Spleen (tissue), 13 donors: ENCODE measurements at regions of chr1 and their contacts with region 1.

Region 1: GRCh38 chr1:18597160-18598042 is 33.2 kb upstream of the PAX7 start:
- DNase-seq: peak; percentile 83
- H3K4me3 ChIP-seq: no peak overlapping the region
- H3K27ac ChIP-seq: no peak overlapping the region
- H3K4me1 ChIP-seq: peaks cover 0 to 5% (median 0%) of the 10 kb centered on the region in 6 donors
- H3K27me3 ChIP-seq: peaks cover 0 to 78% (median 20%) of the 10 kb centered on the region in 7 donors
- CTCF ChIP-seq: peak; percentile 32 to 83 (median 69)
- POLR2A ChIP-seq: no peak

Region 2: DNA sequence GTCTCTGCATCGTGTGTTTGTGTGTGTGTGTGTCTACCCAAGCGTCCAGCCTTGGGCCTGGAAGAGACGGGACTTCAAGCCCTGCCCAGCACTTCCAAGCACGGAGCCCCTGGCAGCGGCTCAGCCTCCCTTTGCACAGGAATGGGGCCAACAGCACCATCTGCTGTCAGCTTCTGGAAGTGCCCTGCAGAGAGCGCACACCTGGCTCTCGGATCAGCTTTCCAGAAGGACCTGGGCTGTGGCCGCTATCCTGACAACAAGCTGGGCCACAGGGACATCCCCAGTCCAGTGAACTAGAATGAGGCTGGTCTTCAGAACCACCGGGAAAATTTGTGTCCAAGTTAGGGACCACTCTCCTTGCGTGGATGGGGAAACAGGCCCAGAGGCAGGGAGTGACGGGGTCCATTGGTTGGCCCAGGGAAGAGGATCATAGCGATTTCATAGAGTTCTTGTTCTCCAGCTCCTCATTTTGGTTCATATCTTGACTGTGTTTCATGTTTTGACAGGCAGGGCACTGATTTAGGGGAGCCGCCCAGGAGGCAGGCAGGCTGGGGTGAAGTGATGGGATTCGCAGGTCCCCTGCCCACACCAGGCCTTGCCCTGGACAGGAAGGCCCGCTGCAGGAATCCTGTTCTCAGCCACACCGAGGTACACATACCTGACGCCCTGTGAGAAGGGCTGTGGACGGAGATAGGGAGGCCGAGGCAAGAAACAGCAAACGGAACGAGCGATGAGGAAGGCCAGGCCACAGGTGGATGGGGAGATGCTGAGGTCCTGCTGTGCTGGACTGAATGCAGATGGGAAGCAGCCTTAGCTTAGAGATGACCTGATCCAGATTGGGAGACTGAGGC is 223.6 kb after region 1 on chr1:
- intact Hi-C with region 1: loop called (anchors 2 kb)
- DNase-seq: peak; percentile 81
- H3K4me3 ChIP-seq: no peak overlapping the region
- H3K27ac ChIP-seq: no peak overlapping the region
- H3K4me1 ChIP-seq: peaks cover 0 to 5% (median 0%) of the 10 kb centered on the region in 6 donors
- H3K27me3 ChIP-seq: peaks cover 0 to 49% (median 19%) of the 10 kb centered on the region in 7 donors
- CTCF ChIP-seq: peak; percentile 38 to 91 (median 81)
- POLR2A ChIP-seq: no peak

Region 3: DNA sequence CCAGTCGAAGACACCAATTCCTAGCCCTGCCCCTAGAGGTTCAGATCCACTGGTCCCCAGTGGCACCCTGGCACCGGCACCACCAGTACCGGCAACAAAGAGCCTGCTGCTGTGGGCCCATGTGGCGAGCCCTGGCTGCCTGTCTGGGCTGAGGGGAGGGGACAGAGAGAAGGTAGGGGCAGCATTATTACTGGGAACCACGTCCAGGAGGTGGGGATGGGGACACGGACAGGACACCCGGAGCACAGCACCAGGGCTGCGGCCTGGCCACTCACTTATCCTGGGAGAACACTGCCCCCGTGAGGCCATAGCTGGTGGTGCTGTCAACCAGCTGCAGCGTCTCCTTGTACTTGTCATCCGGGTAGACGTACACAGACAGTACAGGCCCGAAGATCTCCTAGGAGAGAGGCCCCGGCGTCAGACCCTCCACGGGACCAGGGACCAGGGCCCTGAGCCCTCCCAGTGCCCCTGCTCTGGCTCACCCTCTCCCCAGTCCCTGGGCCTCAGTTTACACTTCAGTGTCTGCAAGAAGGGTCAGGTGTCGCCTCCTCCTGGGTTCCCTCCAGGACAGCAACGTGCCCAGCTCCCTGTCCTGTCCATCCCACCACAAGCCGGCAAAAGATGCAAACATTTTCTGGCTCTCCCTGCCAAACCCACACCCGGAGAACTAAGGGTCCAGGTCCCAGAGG is 277.9 kb after region 1 on chr1:
- intact Hi-C with region 1: loop called (anchors 2 kb)
- DNase-seq: peak; percentile 87
- H3K4me3 ChIP-seq: no peak overlapping the region
- H3K27ac ChIP-seq: no peak overlapping the region
- H3K4me1 ChIP-seq: peaks cover 0 to 7% (median 0%) of the 10 kb centered on the region in 6 donors
- H3K27me3 ChIP-seq: no peaks in the 10 kb centered on the region
- CTCF ChIP-seq: peak in 10 of 11 experiments; percentile 46 to 93 (median 84)
- POLR2A ChIP-seq: no peak